ENCODE measurements at regions of chr22 and their contacts with region 1.

Region 1: GRCh38 chr22:29701155-29701999 is 18.4 kb upstream of the CABP7 start:
- DNase-seq: peak; percentile 51
- ATAC-seq: peak; percentile 74
- H3K4me3 ChIP-seq: 0 out of 4 replicates have a peak overlapping the region, but pooled peaks of 1 of the 2 experiments have one; percentile 9
- H3K27ac ChIP-seq: peak overlapping the region; percentile 38
- H3K4me1 ChIP-seq: peaks cover 36 to 41% of the 10 kb centered on the region in 2 experiments
- H3K27me3 ChIP-seq: no peaks in the 10 kb centered on the region
- CTCF ChIP-seq: peak; percentile 39 to 59 (median 51); a peak in 5 of 6 replicates
- POLR2A ChIP-seq: no peak
- RAD21 ChIP-seq: peak; percentile 67

Region 2: DNA sequence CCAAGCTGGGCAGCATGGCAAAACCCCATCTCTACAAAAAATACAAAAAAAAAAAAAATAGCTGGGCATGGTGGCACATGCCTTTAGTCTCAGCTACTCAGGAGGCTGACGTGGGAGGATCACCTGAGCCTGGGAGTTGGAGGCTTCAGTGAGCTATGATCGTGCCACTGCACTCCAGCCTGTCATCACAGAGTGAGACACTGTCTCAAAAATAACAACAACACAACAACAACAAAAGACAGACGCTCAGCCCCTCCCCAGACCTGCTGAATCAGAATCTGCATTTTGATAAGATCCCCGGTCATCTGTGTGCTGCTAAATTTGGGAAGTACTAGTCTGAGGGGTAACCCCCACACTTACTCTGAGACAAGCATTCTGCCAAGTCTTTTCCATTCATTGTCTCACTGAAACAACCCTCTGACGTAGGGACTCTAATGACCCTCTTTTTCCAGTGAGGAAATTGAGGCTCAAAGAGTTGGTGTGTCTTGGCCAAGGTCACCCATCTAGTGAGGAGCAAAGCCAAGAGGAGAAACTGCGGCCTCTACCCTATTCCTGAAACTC is 213.9 kb before region 1 on chr22:
- CTCF ChIA-PET with region 1: no interaction called
- POLR2A ChIA-PET with region 1: no interaction called
- RAD21 ChIA-PET with region 1: no interaction called
- intact Hi-C with region 1: no loop called
- DNase-seq: no peak
- ATAC-seq: no peak
- H3K4me3 ChIP-seq: no peak overlapping the region
- H3K27ac ChIP-seq: no peak overlapping the region
- H3K4me1 ChIP-seq: no peaks in the 10 kb centered on the region
- H3K27me3 ChIP-seq: no peaks in the 10 kb centered on the region
- CTCF ChIP-seq: no peak
- POLR2A ChIP-seq: no peak
- RAD21 ChIP-seq: no peak

Region 3: DNA sequence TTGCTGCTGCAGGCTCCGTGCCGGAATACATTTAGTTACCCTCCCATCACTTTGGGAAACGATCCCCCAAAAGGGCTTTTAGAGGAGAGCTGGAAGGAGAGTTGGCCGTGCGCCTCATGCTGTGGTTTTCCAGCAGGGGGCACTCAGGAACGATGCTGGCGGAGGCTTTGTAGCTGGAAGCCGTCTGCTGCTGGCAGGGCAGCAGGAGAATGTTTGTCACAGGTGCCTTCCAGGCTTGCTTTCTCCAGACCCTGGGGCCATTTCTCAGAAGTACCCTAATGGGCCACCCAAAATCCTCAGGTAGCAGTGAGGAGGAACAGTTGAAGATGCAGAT is 11.5 kb before region 1 on chr22:
- CTCF ChIA-PET with region 1: interaction called, 15 read pairs
- POLR2A ChIA-PET with region 1: no interaction called
- RAD21 ChIA-PET with region 1: interaction called in 1 of 2 experiments, 4 read pairs
- intact Hi-C with region 1: no loop called
- DNase-seq: no peak
- ATAC-seq: peak; percentile 74
- H3K4me3 ChIP-seq: no peak overlapping the region
- H3K27ac ChIP-seq: no peak overlapping the region
- H3K4me1 ChIP-seq: no peaks in the 10 kb centered on the region
- H3K27me3 ChIP-seq: no peaks in the 10 kb centered on the region
- CTCF ChIP-seq: peak; percentile 56 to 73 (median 71); a peak in 5 of 6 replicates
- POLR2A ChIP-seq: no peak
- RAD21 ChIP-seq: peak; percentile 64

Region 4: DNA sequence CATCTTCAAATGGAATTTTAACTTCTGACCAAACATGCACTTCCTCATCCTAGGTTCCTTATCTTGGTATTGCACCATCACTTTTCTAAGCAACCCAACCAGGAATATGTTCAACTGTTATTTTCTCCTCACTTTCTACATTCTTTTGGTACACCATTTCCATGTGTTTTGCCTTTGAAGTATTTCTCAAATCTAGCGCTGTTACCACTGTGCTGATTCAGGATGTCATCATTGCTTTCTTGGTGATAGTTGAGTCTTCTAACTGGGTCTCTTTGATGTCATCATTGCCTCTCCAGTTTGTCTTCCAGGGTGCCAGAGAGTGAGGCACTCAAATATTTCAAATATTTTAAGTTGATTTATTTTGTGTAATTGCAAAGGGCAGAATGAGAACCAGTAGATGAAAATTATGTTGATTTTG is 426.4 kb after region 1 on chr22:
- CTCF ChIA-PET with region 1: no interaction called
- POLR2A ChIA-PET with region 1: no interaction called
- RAD21 ChIA-PET with region 1: no interaction called
- intact Hi-C with region 1: no loop called
- DNase-seq: no peak
- ATAC-seq: no peak
- H3K4me3 ChIP-seq: no peak overlapping the region
- H3K27ac ChIP-seq: no peak overlapping the region
- H3K4me1 ChIP-seq: peaks cover 0 to 4% of the 10 kb centered on the region in 2 experiments; a peak in 1 of 4 replicates
- H3K27me3 ChIP-seq: no peaks in the 10 kb centered on the region
- CTCF ChIP-seq: no peak
- POLR2A ChIP-seq: no peak
- RAD21 ChIP-seq: no peak

Measured in HCT116 (cell line).